Psoas muscle (tissue), 8 donors: ENCODE measurements at regions of chr10 and their contacts with region 1.

Region 1: GRCh38 chr10:31318854-31319601 is at the start of gene ZEB1:
- DNase-seq: peak; percentile 84 to 91
- ATAC-seq: peak; percentile 82 to 86 (median 82)
- H3K4me3 ChIP-seq: peak within 1 kb of the TSS; percentile 75
- H3K27ac ChIP-seq: peak within 1 kb of the TSS; percentile 97
- H3K4me1 ChIP-seq: peaks cover 32% of the 10 kb centered on the region
- H3K27me3 ChIP-seq: no peaks in the 10 kb centered on the region
- CTCF ChIP-seq: peak; percentile 54
- total RNA-seq, gene ZEB1: 92.0 to 99.8 (median 95.3) TPM

Region 2: GRCh38 chr10:30783939-30784500 is 535.0 kb before region 1 on chr10:
- intact Hi-C with region 1: loop called (anchors 2 to 10 kb)
- DNase-seq: peak; percentile 86 to 94
- ATAC-seq: peak; percentile 80 to 90 (median 88)
- H3K4me3 ChIP-seq: peak overlapping the region; percentile 91
- H3K27ac ChIP-seq: peak overlapping the region; percentile 92
- H3K4me1 ChIP-seq: peaks cover 20% of the 10 kb centered on the region
- H3K27me3 ChIP-seq: no peaks in the 10 kb centered on the region
- CTCF ChIP-seq: peak; percentile 80

Region 3: GRCh38 chr10:31031558-31032257 is 287.3 kb before region 1 on chr10 and contains the start of gene ZNF438:
- intact Hi-C with region 1: loop called (anchors 2 to 5 kb)
- DNase-seq: peak; percentile 95 to 98
- ATAC-seq: peak; percentile 90 to 95 (median 94)
- H3K4me3 ChIP-seq: peak within 1 kb of the TSS; percentile 79
- H3K27ac ChIP-seq: peak within 1 kb of the TSS; percentile 100
- H3K4me1 ChIP-seq: peaks cover 44% of the 10 kb centered on the region
- H3K27me3 ChIP-seq: no peaks in the 10 kb centered on the region
- CTCF ChIP-seq: peak; percentile 52
- total RNA-seq, gene ZNF438: 12.3 to 27.9 (median 17.2) TPM

Region 4: DNA sequence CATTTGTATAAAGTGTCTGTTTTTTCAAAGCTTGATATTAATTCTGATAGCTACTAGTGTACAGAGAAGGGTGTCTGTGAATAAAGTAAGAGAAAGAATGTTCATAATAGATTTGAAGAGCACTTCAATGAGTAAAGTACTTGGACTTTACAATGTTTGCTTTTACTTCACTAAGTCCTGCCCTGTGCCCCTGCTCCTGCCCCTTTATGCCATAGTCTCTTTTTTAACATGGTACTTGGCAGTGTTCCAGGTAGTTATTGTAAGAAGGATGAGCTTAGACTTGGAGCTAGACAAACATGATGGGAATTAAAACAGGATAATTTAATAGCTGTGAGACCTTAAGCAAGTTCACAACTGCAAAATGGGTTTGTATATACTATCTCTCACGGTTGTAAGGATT is 41.0 kb after region 1 on chr10:
- intact Hi-C with region 1: no loop called
- DNase-seq: no peak
- ATAC-seq: peak in 2 of 4 donors; percentile 51 to 60
- H3K4me3 ChIP-seq: no peak overlapping the region
- H3K27ac ChIP-seq: peak overlapping the region; percentile 54
- H3K4me1 ChIP-seq: peaks cover 61% of the 10 kb centered on the region
- H3K27me3 ChIP-seq: no peaks in the 10 kb centered on the region
- CTCF ChIP-seq: no peak

Region 5: GRCh38 chr10:31399631-31400030 is 80.6 kb after region 1 on chr10:
- intact Hi-C with region 1: loop called in 1 of 2 experiments (anchors 10 kb)
- DNase-seq: peak; percentile 20 to 65
- ATAC-seq: peak; percentile 90 to 95 (median 93)
- H3K4me3 ChIP-seq: peak overlapping the region; percentile 45
- H3K27ac ChIP-seq: peak overlapping the region; percentile 80
- H3K4me1 ChIP-seq: peaks cover 91% of the 10 kb centered on the region
- H3K27me3 ChIP-seq: no peaks in the 10 kb centered on the region
- CTCF ChIP-seq: no peak

Region 6: DNA sequence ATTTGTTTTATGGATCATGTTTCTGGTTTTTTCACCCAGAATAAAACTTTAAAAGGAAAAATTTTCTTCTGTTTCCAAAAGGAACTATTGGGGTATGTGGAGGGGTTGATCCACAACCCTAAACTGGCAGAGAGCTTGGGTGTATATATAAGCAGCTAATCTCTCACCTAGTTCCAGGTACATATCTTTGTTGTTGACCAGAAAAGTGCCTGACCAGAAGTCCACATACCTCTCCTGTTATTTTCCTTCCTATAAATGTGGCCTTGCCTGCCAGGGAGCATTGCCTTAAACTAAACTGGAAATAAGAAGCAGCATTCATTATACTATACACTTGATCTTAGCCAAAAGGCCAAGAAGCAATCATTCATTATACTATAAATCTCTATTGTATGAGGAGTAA is 112.0 kb after region 1 on chr10:
- intact Hi-C with region 1: no loop called
- DNase-seq: no peak
- ATAC-seq: no peak
- H3K4me3 ChIP-seq: no peak overlapping the region
- H3K27ac ChIP-seq: no peak overlapping the region
- H3K4me1 ChIP-seq: peaks cover 15% of the 10 kb centered on the region
- H3K27me3 ChIP-seq: no peaks in the 10 kb centered on the region
- CTCF ChIP-seq: no peak

Region 7: GRCh38 chr10:31687663-31688482 is 368.8 kb after region 1 on chr10:
- intact Hi-C with region 1: loop called in 1 of 2 experiments (anchors 10 kb)
- DNase-seq: no peak
- ATAC-seq: peak; percentile 43 to 71 (median 56)
- H3K4me3 ChIP-seq: no peak overlapping the region
- H3K27ac ChIP-seq: no peak overlapping the region
- H3K4me1 ChIP-seq: no peaks in the 10 kb centered on the region
- H3K27me3 ChIP-seq: no peaks in the 10 kb centered on the region
- CTCF ChIP-seq: no peak